Gastrocnemius medialis (tissue), 4 donors: ENCODE measurements at regions of chr12 and their contacts with region 1.

Region 1: GRCh38 chr12:8697476-8698131 is at the start of gene RIMKLB:
- DNase-seq: peak; percentile 46 to 64
- ATAC-seq: peak; percentile 81 to 86
- H3K4me3 ChIP-seq: peak within 1 kb of the TSS; percentile 81 to 97 (median 88)
- H3K27ac ChIP-seq: peak within 1 kb of the TSS; percentile 89 to 94 (median 90)
- H3K4me1 ChIP-seq: peaks cover 14 to 21% of the 10 kb centered on the region in 2 donors
- H3K27me3 ChIP-seq: no peaks in the 10 kb centered on the region
- CTCF ChIP-seq: no peak
- POLR2A ChIP-seq: peak; percentile 79 to 81
- total RNA-seq, gene RIMKLB: 6.9 to 13.7 (median 11.5) TPM

Region 2: GRCh38 chr12:9039397-9039977 is 341.9 kb after region 1 on chr12:
- in situ Hi-C with region 1: loop called in 2 of 4 experiments (anchors 25 kb)
- intact Hi-C with region 1: no loop called
- DNase-seq: no peak
- ATAC-seq: peak; percentile 54 to 68
- H3K4me3 ChIP-seq: no peak overlapping the region
- H3K27ac ChIP-seq: no peak overlapping the region
- H3K4me1 ChIP-seq: peaks cover 0 to 17% of the 10 kb centered on the region in 2 donors
- H3K27me3 ChIP-seq: no peaks in the 10 kb centered on the region
- CTCF ChIP-seq: peak; percentile 43 to 73 (median 62)
- POLR2A ChIP-seq: no peak

Region 3: DNA sequence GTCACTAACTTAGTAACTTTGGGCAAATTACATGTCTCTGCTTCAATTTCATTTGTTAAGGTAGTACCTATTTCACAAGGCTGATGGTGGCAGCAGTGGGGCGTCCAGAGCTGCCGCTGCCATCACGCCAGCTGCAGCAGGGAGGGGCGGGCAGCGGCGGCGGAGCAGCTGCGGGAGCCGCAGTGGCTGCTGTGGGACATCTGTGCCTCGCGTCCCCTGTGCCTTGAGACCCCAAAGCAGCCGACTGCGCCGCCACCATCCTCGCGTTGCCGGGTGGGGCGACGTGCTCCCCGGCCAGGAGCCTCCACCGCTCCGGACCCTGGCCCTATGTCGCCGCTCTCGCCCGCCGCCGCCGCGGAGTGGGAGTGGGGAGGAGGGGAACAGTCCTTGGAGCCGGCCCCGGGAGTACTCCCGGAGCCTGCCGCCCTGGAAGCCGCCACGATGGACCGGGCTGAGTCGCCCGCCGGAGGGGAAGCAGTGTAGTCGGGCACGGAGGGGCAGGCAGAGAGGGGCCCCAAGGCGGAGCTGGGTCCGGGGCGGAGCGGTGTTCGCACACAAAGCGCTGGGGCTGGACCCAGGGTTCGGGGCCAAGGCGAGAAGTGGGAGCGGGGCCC is 366.7 kb after region 1 on chr12:
- in situ Hi-C with region 1: loop called in 1 of 4 experiments (anchors 25 kb)
- intact Hi-C with region 1: loop called (anchors 5 kb)
- DNase-seq: peak; percentile 45 to 57
- ATAC-seq: peak; percentile 80
- H3K4me3 ChIP-seq: peak overlapping the region; percentile 71 to 99 (median 96)
- H3K27ac ChIP-seq: peak overlapping the region; percentile 87 to 98 (median 96)
- H3K4me1 ChIP-seq: peaks cover 8 to 12% of the 10 kb centered on the region in 2 donors
- H3K27me3 ChIP-seq: no peaks in the 10 kb centered on the region
- CTCF ChIP-seq: peak in 3 of 5 experiments; percentile 2 to 52 (median 27)
- POLR2A ChIP-seq: peak in 1 of 2 donors; percentile 17